ENCODE measurements at regions of chr5 and their contacts with region 1.

Region 1: DNA sequence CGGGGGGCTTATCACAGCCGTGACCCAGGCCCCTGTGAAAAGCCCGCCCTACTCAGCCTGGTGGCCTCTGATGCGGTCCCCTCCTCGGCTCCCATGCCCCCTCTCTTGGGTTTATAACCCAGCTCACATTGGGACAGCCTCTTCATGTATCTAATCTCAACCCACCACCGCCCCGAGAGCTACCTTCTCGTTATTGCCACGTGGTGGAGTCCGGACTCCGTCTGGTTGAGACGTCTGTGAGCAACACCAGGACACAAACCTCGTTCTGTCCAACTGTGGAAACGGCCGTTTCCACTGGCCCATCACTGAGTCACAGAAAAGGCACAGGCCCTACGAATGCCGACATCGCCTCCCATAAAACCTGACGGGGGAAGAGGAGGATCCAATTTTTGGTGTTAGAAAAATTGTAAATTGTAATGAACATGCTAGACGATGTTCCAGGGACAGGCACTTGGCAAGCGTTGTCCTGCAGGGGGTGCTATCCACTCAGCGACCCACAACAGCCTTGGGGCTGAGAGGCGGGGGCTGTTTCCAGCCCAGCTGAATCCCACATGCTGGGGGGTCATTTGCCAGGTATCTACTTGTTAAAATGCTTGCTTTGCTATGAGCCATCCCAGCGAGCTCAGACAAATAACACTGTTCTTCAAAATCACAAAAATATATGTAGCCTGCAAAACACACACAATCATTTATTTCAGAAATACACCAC is 37.3 kb upstream of the N4BP3 start:
- DNase-seq: peak; percentile 90
- H3K4me3 ChIP-seq: peak overlapping the region in 1 of 8 donors; percentile 41
- H3K27ac ChIP-seq: no peak overlapping the region
- H3K4me1 ChIP-seq: peaks cover 0 to 9% (median 3%) of the 10 kb centered on the region in 6 donors
- H3K27me3 ChIP-seq: peaks cover 0 to 30% (median 14%) of the 10 kb centered on the region in 7 donors
- CTCF ChIP-seq: peak; percentile 83 to 95 (median 91)
- POLR2A ChIP-seq: no peak

Region 2: GRCh38 chr5:178146020-178146820 is 70.2 kb after region 1 on chr5:
- intact Hi-C with region 1: loop called (anchors 5 kb)
- DNase-seq: peak; percentile 90
- H3K4me3 ChIP-seq: no peak overlapping the region
- H3K27ac ChIP-seq: no peak overlapping the region
- H3K4me1 ChIP-seq: peaks cover 0 to 29% (median under 1%) of the 10 kb centered on the region in 6 donors
- H3K27me3 ChIP-seq: no peaks in the 10 kb centered on the region
- CTCF ChIP-seq: peak; percentile 49 to 83 (median 68)
- POLR2A ChIP-seq: no peak

Region 3: GRCh38 chr5:178163772-178164735 is 88.1 kb after region 1 on chr5:
- intact Hi-C with region 1: loop called (anchors 5 kb)
- DNase-seq: peak; percentile 97
- H3K4me3 ChIP-seq: peak overlapping the region in 2 of 8 donors; percentile 25 to 50
- H3K27ac ChIP-seq: no peak overlapping the region
- H3K4me1 ChIP-seq: peaks cover 0 to 12% (median 9%) of the 10 kb centered on the region in 6 donors
- H3K27me3 ChIP-seq: peaks cover 0 to 39% (median 6%) of the 10 kb centered on the region in 7 donors
- CTCF ChIP-seq: peak; percentile 96 to 99 (median 99)
- POLR2A ChIP-seq: no peak

Measured in spleen (tissue), 13 donors.